Activated CD4-positive, alpha-beta memory T cell treated with anti-CD3 and anti-CD28 coated beads for 36 hours (primary cell): ENCODE measurements at regions of chr16 and their contacts with region 1.

Region 1: DNA sequence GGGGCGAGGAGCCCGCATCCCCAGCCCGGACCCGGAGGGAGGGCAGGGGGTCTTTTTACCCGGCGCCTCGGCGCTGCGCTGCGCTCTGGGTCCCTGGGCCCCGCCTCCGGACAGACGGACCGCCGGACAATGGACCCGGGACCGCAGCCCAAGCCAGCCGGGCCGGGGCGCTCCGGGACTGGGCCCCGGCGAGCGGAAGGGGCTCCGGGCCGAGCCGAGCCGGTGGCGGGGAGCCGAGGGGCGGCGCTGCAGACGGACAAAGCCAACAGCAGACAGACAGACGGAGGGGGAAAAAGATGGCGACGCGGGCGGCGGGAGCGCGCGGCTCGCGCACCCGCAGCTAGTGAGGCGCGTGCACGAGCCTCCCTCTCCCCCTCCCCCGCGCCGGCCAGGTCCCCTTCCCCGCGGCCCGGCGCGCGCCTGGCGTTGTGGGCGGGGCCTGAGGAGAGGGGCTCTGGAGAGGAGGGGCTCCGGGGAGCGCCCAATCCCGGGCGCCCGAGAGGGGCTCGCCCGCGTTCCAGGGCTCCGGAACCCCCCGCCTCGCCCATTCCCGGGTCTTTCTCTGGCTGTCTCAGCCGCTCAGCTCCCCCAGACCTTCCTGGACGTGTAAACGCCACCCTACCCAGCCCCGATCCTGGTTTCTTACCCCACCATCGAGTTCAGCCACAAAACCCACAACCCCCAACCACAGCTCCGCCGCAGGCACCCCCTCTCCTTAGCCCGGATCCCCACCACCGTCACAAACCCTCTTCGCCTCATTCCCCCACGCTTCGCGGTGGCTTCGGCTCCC is at the start of gene ZNF821:
- DNase-seq: peak; percentile 83
- H3K4me3 Mint-ChIP-seq: peak within 1 kb of the TSS; percentile 93
- H3K27ac Mint-ChIP-seq: peak within 1 kb of the TSS; percentile 90
- H3K4me1 Mint-ChIP-seq: peaks cover 45% of the 10 kb centered on the region
- H3K27me3 Mint-ChIP-seq: peaks cover 1% of the 10 kb centered on the region
- total RNA-seq, gene ZNF821: 6.8 to 7.3 TPM

Region 2: GRCh38 chr16:71564155-71564967 is 319.7 kb before region 1 on chr16:
- CTCF ChIA-PET with region 1: no interaction called
- POLR2A ChIA-PET with region 1: no interaction called
- intact Hi-C with region 1: loop called (anchors 10 kb)
- DNase-seq: no peak
- H3K4me3 Mint-ChIP-seq: peak overlapping the region; percentile 79
- H3K27ac Mint-ChIP-seq: peak overlapping the region; percentile 92
- H3K4me1 Mint-ChIP-seq: peaks cover 14% of the 10 kb centered on the region
- H3K27me3 Mint-ChIP-seq: no peaks in the 10 kb centered on the region

Region 3: GRCh38 chr16:71794943-71795342 is 89.1 kb before region 1 on chr16:
- CTCF ChIA-PET with region 1: interaction called, 5 read pairs
- POLR2A ChIA-PET with region 1: no interaction called
- intact Hi-C with region 1: loop called (anchors 5 kb)
- DNase-seq: no peak
- H3K4me3 Mint-ChIP-seq: no peak overlapping the region
- H3K27ac Mint-ChIP-seq: peak overlapping the region; percentile 14
- H3K4me1 Mint-ChIP-seq: peaks cover 56% of the 10 kb centered on the region
- H3K27me3 Mint-ChIP-seq: no peaks in the 10 kb centered on the region

Region 4: DNA sequence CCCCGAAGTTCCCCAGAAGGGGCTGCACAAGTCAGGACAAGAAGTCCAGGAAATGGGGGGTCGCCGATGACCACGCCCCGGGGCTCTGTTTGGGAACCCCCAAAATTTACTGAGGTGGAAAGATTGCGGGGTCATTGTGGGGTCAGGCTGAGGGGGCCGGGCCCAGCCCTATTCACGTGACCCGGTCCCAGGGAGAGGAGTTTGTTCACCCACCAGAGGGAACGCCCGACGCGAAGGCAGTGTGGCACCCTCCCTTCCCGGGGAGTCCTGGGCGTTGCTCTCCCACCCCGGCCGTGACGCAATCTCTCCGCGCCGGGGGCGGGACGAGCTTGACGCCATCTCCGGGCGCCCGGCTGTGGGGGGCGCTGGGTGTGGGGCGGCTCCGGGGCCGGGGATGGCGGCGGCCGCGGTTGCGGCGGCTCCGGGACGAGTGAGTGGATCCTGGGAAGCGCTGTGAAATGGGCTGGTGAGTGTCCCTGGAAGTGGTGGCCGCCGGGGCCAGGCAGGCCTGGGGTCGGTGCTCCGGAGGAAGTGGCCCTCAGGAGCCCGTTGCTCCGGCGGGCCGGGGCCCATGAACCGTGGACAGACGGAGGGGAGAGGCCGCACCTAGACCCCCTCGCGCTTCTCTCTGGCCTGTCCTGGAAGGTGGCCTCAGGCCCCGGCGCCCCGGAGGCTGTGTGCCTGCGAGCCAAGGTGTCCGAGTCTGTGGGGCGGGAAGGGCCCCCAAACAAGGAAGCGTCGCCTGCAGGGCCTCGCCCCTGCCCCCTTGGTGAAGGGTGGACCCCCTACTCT is 38.2 kb before region 1 on chr16 and contains the start of gene ATXN1L:
- CTCF ChIA-PET with region 1: interaction called, 8 read pairs
- POLR2A ChIA-PET with region 1: interaction called, 5 read pairs
- intact Hi-C with region 1: loop called (anchors 1 kb)
- DNase-seq: peak; percentile 95
- H3K4me3 Mint-ChIP-seq: peak within 1 kb of the TSS; percentile 91
- H3K27ac Mint-ChIP-seq: peak within 1 kb of the TSS; percentile 92
- H3K4me1 Mint-ChIP-seq: peaks cover 41% of the 10 kb centered on the region
- H3K27me3 Mint-ChIP-seq: no peaks in the 10 kb centered on the region
- total RNA-seq, gene ATXN1L: 14.6 to 15.1 TPM

Region 5: DNA sequence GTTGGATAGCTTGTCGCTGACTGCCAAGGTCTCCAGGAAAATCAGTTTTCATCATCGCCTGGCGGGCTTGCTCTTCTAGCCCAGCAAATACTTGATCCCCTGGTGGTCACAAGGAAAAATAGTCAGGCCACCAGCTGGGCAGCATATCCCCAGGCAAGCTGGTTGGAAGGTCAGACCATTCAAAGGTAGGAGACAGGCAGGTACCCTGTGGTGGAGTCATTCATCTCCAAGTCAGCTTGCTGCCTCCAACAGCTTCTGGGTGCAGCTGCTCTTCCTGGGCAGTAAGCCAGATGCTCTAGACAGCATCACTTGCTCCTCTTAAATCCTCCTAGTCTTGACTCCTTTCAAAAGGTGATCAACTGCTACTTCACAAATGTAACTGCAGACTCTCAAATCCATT is 16.1 kb before region 1 on chr16:
- CTCF ChIA-PET with region 1: interaction called, 32 read pairs
- POLR2A ChIA-PET with region 1: interaction called, 5 read pairs
- intact Hi-C with region 1: no loop called
- DNase-seq: no peak
- H3K4me3 Mint-ChIP-seq: no peak overlapping the region
- H3K27ac Mint-ChIP-seq: no peak overlapping the region
- H3K4me1 Mint-ChIP-seq: peaks cover 34% of the 10 kb centered on the region
- H3K27me3 Mint-ChIP-seq: no peaks in the 10 kb centered on the region

Region 6: GRCh38 chr16:71894921-71895678 is 11.1 kb after region 1 on chr16 and contains the start of gene IST1:
- CTCF ChIA-PET with region 1: interaction called, 55 read pairs
- POLR2A ChIA-PET with region 1: interaction called, 38 read pairs
- intact Hi-C with region 1: loop called (anchors 1 kb)
- DNase-seq: peak; percentile 99
- H3K4me3 Mint-ChIP-seq: peak within 1 kb of the TSS; percentile 95
- H3K27ac Mint-ChIP-seq: peak within 1 kb of the TSS; percentile 97
- H3K4me1 Mint-ChIP-seq: peaks cover 27% of the 10 kb centered on the region
- H3K27me3 Mint-ChIP-seq: no peaks in the 10 kb centered on the region
- total RNA-seq, gene IST1: 191 to 192 TPM

Region 7: DNA sequence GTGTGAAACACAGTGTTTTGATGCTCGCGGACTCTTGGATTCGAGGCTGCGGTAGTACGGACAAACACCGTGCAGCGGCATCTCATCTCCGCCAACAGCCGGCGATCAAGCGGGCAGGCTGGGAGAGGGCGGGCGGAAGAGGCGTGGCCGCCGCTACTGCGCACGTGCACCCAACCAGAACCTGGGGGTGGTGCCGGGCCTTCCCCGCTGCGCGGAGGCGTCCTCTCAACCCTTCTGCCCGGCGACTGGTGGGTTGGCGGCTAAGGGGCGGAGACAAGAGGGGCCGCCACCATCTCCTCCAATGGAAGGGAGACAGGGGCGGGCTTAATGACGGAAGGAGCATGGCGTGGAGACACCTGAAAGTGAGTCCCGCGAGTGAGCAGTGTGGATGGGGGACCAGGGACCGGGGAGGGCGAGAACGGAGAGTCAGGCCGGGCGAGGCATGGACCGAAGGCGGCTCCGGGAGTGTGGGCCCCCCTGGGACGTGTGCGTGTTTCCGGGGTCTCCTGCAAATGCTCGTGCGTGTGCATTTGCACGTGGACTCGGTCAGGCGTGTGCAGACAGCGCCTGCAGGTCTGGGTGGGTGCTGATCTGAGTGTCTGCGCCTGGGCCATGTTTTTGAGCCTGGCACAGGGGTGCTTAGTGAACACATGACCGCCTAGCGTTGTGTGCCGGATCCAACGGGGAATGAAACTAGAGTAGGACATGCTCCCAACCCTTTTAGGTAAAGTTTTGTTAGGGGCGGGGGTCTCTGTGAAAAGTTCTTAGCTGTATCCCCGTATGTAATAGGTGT is 124.6 kb after region 1 on chr16 and contains the start of gene DHODH:
- CTCF ChIA-PET with region 1: no interaction called
- POLR2A ChIA-PET with region 1: no interaction called
- intact Hi-C with region 1: loop called (anchors 5 kb)
- DNase-seq: peak; percentile 99
- H3K4me3 Mint-ChIP-seq: peak within 1 kb of the TSS; percentile 91
- H3K27ac Mint-ChIP-seq: peak within 1 kb of the TSS; percentile 76
- H3K4me1 Mint-ChIP-seq: peaks cover 21% of the 10 kb centered on the region
- H3K27me3 Mint-ChIP-seq: no peaks in the 10 kb centered on the region
- total RNA-seq, gene DHODH: 16.9 to 18.6 TPM